Aorta (tissue), 5 donors: ENCODE measurements at regions of chr11 and their contacts with region 1.

Region 1: GRCh38 chr11:45846974-45847910 is at the start of gene CRY2:
- DNase-seq: peak; percentile 99 to 100
- ATAC-seq: peak; percentile 99
- H3K4me3 ChIP-seq: peak within 1 kb of the TSS; percentile 52 to 74
- H3K27ac ChIP-seq: peak within 1 kb of the TSS; percentile 87 to 93
- H3K4me1 ChIP-seq: peaks cover 4 to 6% of the 10 kb centered on the region in 2 donors
- H3K27me3 ChIP-seq: no peaks in the 10 kb centered on the region
- total RNA-seq, gene CRY2: 32.6 to 54.1 TPM

Region 2: GRCh38 chr11:45798793-45799441 is 48.3 kb before region 1 on chr11:
- intact Hi-C with region 1: no loop called
- DNase-seq: no peak
- ATAC-seq: no peak
- H3K4me3 ChIP-seq: no peak overlapping the region
- H3K27ac ChIP-seq: no peak overlapping the region
- H3K4me1 ChIP-seq: no peaks in the 10 kb centered on the region
- H3K27me3 ChIP-seq: no peaks in the 10 kb centered on the region

Region 3: DNA sequence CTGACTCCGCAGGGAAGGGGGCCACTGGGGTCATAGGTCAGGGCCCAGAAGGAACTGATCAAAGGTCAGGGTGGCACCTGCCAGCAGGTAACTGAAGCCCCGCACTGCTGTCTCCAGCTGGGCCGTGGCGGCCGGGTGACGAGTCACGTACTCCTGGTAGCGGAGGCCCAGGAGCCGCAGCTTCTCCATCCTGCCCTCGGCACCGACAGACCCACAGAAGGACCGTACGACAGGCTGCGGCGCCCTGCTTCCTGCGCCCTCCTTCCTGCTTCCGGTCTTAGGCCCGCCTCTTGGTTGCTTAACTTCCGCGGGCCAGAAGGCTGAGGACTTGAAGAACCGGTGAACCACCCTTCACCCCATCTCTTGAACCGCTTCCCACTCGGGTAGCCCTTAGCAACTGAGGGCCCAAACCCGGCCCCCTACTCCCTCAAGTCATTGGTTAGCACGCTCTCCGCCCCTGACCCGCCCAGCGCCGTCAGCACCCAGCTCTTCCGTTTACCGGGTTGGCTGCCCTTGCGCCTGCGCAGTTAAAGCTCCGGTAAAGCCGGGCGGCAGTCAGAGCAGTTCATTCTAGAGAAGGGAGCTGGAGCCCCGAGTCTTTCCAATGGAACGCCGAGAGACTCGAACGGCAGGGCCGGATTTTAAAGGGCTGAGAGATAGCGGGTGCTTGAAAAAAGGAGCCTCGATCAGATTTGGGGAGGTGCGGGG is 70.5 kb after region 1 on chr11 and contains the start of gene PEX16:
- intact Hi-C with region 1: loop called (anchors 2 to 5 kb)
- DNase-seq: peak; percentile 99
- ATAC-seq: peak; percentile 96
- H3K4me3 ChIP-seq: peak within 1 kb of the TSS; percentile 80 to 89
- H3K27ac ChIP-seq: peak within 1 kb of the TSS in 1 of 2 donors; percentile 92
- H3K4me1 ChIP-seq: no peaks in the 10 kb centered on the region
- H3K27me3 ChIP-seq: no peaks in the 10 kb centered on the region
- total RNA-seq, gene PEX16: 21.4 to 26.9 TPM